Aorta (tissue), 5 donors: ENCODE measurements at regions of chr22 and their contacts with region 1.

Region 1: GRCh38 chr22:36977947-36978660 is 41.1 kb downstream of the TST start:
- DNase-seq: peak; percentile 94 to 97
- ATAC-seq: peak; percentile 98
- H3K4me3 ChIP-seq: peak overlapping the region in 1 of 2 donors; percentile 2
- H3K27ac ChIP-seq: no peak overlapping the region
- H3K4me1 ChIP-seq: no peaks in the 10 kb centered on the region
- H3K27me3 ChIP-seq: peaks cover 0 to 2% of the 10 kb centered on the region in 2 donors

Region 2: DNA sequence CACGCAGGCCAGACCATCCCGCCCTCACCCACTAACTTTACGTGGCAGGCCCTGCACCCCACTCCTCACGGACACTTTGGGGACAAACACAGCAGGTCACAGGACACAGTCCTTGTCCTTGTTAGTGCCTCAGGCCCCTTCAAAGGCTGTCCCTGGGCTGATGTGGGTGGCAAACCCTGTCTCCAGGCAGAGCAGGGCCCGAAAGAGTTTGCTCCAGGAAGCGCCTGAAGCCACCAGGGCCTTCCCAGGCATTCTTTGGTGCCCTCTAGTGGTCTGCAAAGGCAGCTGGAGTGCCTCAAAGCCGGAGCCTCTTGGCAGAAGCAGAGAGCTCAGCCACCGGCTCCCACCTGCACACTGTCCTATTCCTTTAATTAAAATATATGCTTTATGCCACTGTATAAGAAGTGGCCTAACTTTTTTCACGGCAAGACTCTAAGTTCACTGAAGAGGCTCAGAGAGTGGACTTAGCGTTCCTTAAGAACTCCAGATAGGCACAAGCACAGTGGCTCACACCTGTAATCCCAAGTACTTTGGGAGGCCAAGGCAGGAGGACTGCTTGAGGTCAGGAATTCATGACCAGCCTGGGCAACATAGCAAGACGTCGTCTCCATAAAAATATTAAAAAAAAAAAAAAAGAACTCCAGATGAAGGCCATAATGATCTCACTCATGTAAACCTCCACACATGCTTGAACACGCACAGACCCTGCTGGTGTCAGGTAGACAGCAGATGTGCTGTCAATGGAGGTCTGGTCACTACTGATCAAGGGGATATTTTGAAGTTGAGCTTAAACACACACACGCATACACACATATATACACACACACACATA is 507.7 kb before region 1 on chr22:
- intact Hi-C with region 1: no loop called
- DNase-seq: peak; percentile 89 to 90
- ATAC-seq: peak; percentile 88
- H3K4me3 ChIP-seq: no peak overlapping the region
- H3K27ac ChIP-seq: peak overlapping the region in 1 of 2 donors; percentile 90
- H3K4me1 ChIP-seq: no peaks in the 10 kb centered on the region
- H3K27me3 ChIP-seq: no peaks in the 10 kb centered on the region

Region 3: DNA sequence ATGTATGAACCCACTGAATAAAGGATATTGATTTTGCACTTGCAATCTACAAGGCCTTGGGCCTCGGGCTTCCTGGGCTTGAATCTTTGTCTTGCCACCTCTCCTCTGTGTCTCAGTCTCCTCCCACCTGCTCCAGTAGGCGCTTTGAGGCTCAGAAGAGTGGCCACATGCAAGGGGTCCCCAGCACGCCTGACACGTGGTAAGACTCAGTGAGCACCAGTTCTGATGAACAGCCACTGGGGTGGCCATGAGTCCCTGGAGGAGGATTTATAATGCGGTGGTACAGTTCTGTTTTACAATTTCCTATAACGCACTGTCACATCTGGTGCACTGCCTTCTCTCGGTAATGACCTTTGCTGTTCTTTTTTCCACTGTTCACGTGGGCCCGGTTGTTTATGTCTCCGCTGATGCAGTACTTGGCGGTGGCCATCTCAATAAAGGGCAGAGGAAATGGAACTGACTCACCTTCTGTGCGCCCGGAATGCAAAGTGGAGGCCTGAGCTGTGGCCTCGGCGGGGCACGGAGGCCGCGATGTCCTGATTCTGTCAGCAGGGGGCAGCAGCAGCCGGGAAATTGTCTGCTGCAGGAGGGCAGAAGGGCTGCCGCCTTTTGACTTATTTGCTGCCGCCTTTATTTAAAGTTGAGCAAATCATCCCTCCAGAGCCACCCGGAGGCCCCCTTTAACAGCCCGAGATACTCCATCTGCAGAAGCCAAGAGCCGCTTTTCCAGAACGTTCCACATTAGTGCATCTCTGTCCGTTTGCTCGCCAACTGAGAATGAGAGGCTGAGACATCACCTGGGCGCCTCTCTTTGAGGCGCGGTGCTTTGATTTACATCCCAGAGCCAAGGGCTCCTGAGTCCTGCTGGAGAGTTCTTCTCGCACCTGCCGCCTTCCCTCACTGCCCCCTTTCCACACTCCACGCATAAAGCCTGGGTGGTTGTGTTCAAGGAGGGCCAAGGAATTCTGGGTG is 196.2 kb before region 1 on chr22:
- intact Hi-C with region 1: loop called (anchors 5 kb)
- DNase-seq: peak; percentile 88 to 93
- ATAC-seq: peak; percentile 89
- H3K4me3 ChIP-seq: no peak overlapping the region
- H3K27ac ChIP-seq: no peak overlapping the region
- H3K4me1 ChIP-seq: no peaks in the 10 kb centered on the region
- H3K27me3 ChIP-seq: no peaks in the 10 kb centered on the region

Region 4: DNA sequence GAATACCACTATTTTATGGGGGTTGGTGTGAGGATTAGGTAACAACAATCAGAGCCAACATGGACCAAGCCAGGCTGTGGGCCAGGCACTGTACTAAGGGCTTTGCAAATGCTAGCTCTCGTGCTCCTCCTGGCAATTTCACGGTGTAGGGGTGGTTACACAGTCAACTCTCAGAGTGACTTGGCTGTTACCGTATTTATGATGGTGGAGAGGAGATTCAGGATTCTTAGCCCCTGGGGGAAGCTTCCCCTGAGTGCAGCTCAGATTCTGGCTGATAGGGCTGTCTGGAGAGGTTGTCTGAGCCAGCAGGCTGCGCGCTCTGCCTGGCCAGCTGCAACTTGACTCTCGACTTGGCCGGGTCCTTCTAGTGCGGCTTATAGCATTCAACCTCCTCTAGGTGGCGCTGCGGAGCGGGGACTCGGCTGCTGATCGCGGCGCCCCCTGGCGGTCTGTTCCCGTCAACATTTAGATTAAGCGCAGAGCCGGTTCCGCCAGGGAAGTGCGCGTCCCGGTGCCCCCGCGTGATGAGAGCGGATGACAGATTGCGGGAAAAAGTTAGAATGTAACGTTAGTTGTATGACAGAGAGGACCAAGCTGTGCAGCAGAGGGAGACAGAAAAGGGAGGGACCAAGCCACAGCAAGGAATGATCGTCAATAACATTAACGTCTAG is 121.8 kb before region 1 on chr22:
- intact Hi-C with region 1: loop called in 1 of 2 experiments (anchors 5 kb)
- DNase-seq: peak; percentile 93 to 97
- ATAC-seq: peak; percentile 92
- H3K4me3 ChIP-seq: no peak overlapping the region
- H3K27ac ChIP-seq: no peak overlapping the region
- H3K4me1 ChIP-seq: no peaks in the 10 kb centered on the region
- H3K27me3 ChIP-seq: no peaks in the 10 kb centered on the region

Region 5: DNA sequence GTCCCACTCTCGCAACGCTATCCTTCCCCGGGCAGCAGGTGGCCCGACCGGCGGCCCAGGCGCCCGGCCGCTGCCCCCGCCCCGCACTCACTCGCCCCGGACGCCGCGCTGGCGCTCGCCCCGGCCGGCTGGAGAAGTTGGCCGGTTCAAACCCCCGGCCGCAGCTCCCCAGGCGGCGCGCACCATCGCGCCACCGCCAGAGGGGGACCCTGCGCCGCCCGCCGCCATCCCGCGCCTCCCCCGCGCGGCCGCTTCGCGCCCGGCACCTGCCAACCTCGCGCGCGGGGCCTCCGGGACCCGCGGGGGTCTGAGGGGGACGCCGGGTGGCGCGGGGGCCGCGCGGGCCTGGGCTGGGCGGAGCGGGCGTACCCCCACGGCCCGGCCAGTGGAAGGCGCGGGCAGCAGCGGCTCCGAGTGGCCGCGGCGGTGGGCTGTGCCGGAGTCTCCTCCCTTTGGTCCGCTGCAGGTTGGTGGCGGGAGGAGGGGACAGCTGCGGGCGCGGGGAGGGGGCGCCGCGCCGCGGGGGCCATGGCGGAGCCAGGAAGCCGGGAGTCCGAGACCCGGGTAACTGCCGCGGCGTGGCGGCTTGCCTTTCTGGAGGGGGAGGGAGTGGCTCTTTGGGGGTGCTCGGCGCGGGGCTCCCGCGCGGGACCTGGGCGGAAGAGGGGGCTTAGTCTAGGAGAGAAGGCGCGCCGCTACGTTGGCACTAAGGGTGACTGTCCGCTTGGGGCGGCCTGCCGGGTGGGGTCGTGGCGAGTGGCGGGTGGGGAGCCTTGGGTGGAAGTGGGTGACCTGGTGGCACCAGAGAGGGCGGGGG is 41.4 kb after region 1 on chr22 and contains the starts of genes MPST and TST:
- intact Hi-C with region 1: loop called in 1 of 2 experiments (anchors 2 kb)
- DNase-seq: peak; percentile 87 to 93
- ATAC-seq: peak; percentile 90
- H3K4me3 ChIP-seq: peak within 1 kb of the TSS; percentile 93 to 94
- H3K27ac ChIP-seq: peak within 1 kb of the TSS; percentile 36 to 66
- H3K4me1 ChIP-seq: peaks cover 0 to 3% of the 10 kb centered on the region in 2 donors
- H3K27me3 ChIP-seq: no peaks in the 10 kb centered on the region
- total RNA-seq, gene MPST: 30.8 to 38.6 TPM
- total RNA-seq, gene TST: 9.7 to 10.0 TPM